A673 (cell line): ENCODE measurements at regions of chr6 and their contacts with region 1.

Region 1: GRCh38 chr6:147868427-147869190 is 360.1 kb downstream of the SAMD5 start:
- DNase-seq: peak; percentile 94
- H3K4me3 ChIP-seq: peak overlapping the region; percentile 1
- H3K27ac ChIP-seq: peak overlapping the region; percentile 79
- H3K4me1 ChIP-seq: peaks cover 50% of the 10 kb centered on the region
- H3K27me3 ChIP-seq: no peaks in the 10 kb centered on the region
- CTCF ChIP-seq: no peak

Region 2: GRCh38 chr6:147642458-147642857 is 226.2 kb before region 1 on chr6:
- CTCF ChIA-PET with region 1: no interaction called
- POLR2A ChIA-PET with region 1: no interaction called
- intact Hi-C with region 1: loop called (anchors 2 kb)
- DNase-seq: no peak
- H3K4me3 ChIP-seq: no peak overlapping the region
- H3K27ac ChIP-seq: peak overlapping the region; percentile 58
- H3K4me1 ChIP-seq: peaks cover 50% of the 10 kb centered on the region
- H3K27me3 ChIP-seq: no peaks in the 10 kb centered on the region
- CTCF ChIP-seq: no peak

Region 3: DNA sequence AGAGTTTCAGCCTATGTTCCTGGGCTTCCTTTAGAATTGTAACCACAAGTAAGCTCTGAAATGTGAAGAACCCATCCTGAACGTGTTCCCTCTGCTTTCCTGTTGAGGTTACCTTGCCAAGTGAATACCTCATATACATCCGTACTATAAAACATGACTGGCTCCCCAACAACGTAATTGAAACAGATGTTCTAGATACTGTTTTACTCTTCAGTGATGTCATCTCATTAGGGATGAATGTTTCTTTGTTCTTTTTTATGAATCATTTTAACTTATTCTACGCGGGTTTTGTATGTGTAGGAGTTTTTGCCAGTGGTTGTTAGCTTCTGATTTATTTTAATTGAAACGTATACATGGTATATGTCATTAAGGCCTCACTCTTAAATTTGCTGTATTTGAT is 193.3 kb before region 1 on chr6:
- CTCF ChIA-PET with region 1: no interaction called
- POLR2A ChIA-PET with region 1: no interaction called
- intact Hi-C with region 1: loop called (anchors 5 kb)
- DNase-seq: no peak
- H3K4me3 ChIP-seq: no peak overlapping the region
- H3K27ac ChIP-seq: no peak overlapping the region
- H3K4me1 ChIP-seq: peaks cover 41% of the 10 kb centered on the region
- H3K27me3 ChIP-seq: no peaks in the 10 kb centered on the region
- CTCF ChIP-seq: no peak

Region 4: GRCh38 chr6:147787417-147787816 is 81.2 kb before region 1 on chr6:
- CTCF ChIA-PET with region 1: no interaction called
- POLR2A ChIA-PET with region 1: no interaction called
- intact Hi-C with region 1: loop called (anchors 5 kb)
- DNase-seq: peak; percentile 56
- H3K4me3 ChIP-seq: no peak overlapping the region
- H3K27ac ChIP-seq: no peak overlapping the region
- H3K4me1 ChIP-seq: peaks cover 47% of the 10 kb centered on the region
- H3K27me3 ChIP-seq: no peaks in the 10 kb centered on the region
- CTCF ChIP-seq: peak; percentile 60

Region 5: GRCh38 chr6:148109732-148110131 is 241.1 kb after region 1 on chr6:
- CTCF ChIA-PET with region 1: no interaction called
- POLR2A ChIA-PET with region 1: no interaction called
- intact Hi-C with region 1: no loop called
- DNase-seq: no peak
- H3K4me3 ChIP-seq: no peak overlapping the region
- H3K27ac ChIP-seq: no peak overlapping the region
- H3K4me1 ChIP-seq: no peaks in the 10 kb centered on the region
- H3K27me3 ChIP-seq: no peaks in the 10 kb centered on the region
- CTCF ChIP-seq: no peak